A549 (cell line): ENCODE measurements at regions of chr4 and their contacts with region 1.

Region 1: GRCh38 chr4:157983300-157983699 is 189.5 kb downstream of the GASK1B start:
- DNase-seq: no peak
- ATAC-seq: no peak
- H3K4me3 ChIP-seq: no peak overlapping the region
- H3K27ac ChIP-seq: no peak overlapping the region
- H3K4me1 ChIP-seq: no peaks in the 10 kb centered on the region
- CTCF ChIP-seq: no peak
- EP300 ChIP-seq: no peak
- POLR2A ChIP-seq: no peak
- RAD21 ChIP-seq: no peak

Region 2: DNA sequence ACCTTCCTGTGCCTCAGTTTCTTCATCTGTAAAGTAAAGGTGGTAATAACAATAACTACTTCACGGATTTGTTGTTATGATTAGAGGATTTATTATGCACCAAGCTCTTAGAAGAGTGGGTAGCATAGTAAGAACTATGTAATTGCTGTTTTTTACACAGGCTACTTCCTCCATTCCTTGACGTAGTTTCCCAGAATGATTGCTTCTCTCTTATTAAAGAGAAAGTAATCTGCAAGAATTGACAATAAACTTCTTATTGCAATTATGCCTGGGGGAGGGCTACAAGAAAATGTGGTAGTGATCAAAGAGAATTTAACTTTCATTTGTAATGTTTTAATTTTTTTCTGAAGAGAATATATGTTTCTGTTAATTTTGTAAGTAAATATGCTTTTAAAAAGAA is 49.1 kb before region 1 on chr4:
- CTCF ChIA-PET with region 1: no interaction called
- POLR2A ChIA-PET with region 1: no interaction called
- DNase-seq: no peak
- ATAC-seq: no peak
- H3K4me3 ChIP-seq: no peak overlapping the region
- H3K27ac ChIP-seq: no peak overlapping the region
- H3K4me1 ChIP-seq: no peaks in the 10 kb centered on the region
- CTCF ChIP-seq: no peak
- EP300 ChIP-seq: no peak
- POLR2A ChIP-seq: no peak
- RAD21 ChIP-seq: no peak

Region 3: DNA sequence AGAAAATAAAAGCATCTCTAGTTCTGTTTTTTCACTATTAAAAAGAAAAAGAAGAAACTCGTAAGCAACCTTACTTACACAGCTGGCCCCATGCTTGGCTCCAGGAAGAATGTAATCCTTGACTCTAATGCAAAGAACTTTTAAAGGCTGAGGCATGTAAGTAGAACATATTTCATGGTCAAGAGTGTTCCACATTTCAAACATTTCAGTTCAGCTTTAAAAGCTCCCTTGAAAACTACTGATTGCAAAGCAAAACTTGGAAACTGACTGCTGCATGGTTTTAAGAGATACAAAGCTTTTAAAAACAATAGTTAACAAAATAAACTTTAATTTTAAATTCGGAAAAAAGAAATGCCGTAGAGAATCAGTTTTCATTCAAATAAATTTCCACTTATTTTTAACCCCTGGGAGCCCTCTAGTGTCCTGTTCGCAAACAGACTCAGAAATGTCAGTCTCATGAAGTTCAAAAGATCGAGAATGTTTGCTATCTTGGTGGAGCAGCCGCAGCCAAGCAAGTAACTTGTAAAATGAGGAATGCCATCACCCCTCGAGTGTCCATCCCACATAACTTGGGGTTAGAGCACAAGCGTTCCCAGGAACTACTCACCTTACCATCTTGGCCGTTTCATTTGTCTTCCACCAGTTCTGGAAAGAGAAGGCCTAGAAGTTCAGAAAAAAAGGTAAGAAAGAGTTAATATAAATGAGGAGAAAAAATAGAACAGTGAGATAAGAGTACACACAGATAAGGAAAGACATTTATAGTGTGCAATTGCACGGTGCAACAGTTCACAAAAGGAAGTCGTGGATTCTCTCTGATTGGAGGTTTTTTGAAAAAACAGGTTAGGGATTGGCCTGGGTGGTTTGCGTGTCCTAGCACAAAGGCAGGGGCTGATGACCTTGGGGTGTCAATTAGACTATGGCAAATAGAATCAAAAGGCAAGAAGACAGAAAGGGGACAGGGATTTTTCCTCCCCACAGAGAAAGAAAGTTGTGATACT is 189.3 kb after region 1 on chr4 and contains the start of gene GASK1B:
- CTCF ChIA-PET with region 1: interaction called, 14 read pairs
- POLR2A ChIA-PET with region 1: no interaction called
- DNase-seq: peak; percentile 25 to 53
- ATAC-seq: peak; percentile 74 to 82
- H3K4me3 ChIP-seq: peak within 1 kb of the TSS; percentile 23; the same call in 1 of the 3 replicates
- H3K27ac ChIP-seq: peak within 1 kb of the TSS; percentile 60 to 76
- H3K4me1 ChIP-seq: peaks cover 5% of the 10 kb centered on the region; the same call in 2 of the 3 replicates
- CTCF ChIP-seq: peak; percentile 79
- EP300 ChIP-seq: no peak
- POLR2A ChIP-seq: no peak
- RAD21 ChIP-seq: peak; percentile 82 to 89
- polyA plus RNA-seq, gene GASK1B: 2.4 and 2.9 TPM in 2 replicates